HepG2 (cell line): ENCODE measurements at regions of chr2 and their contacts with region 1.

Region 1: GRCh38 chr2:69214898-69215297 is 172.1 kb downstream of the GFPT1 start:
- DNase-seq: peak; percentile 46
- ATAC-seq: no peak
- H3K4me3 ChIP-seq: no peak overlapping the region
- H3K27ac ChIP-seq: peak overlapping the region; percentile 87
- H3K4me1 ChIP-seq: peaks cover 74% of the 10 kb centered on the region
- H3K27me3 ChIP-seq: no peaks in the 10 kb centered on the region
- CTCF ChIP-seq: no peak
- EP300 ChIP-seq: no peak
- POLR2A ChIP-seq: no peak
- RAD21 ChIP-seq: no peak

Region 2: GRCh38 chr2:68031542-68032160 is 1183.2 kb before region 1 on chr2:
- CTCF ChIA-PET with region 1: no interaction called
- POLR2A ChIA-PET with region 1: no interaction called
- in situ Hi-C with region 1: no loop called
- intact Hi-C with region 1: no loop called
- DNase-seq: peak; percentile 64
- ATAC-seq: peak; percentile 83
- H3K4me3 ChIP-seq: no peak overlapping the region
- H3K27ac ChIP-seq: no peak overlapping the region
- H3K4me1 ChIP-seq: no peaks in the 10 kb centered on the region
- H3K27me3 ChIP-seq: no peaks in the 10 kb centered on the region
- CTCF ChIP-seq: peak; percentile 84
- EP300 ChIP-seq: no peak
- POLR2A ChIP-seq: no peak
- RAD21 ChIP-seq: peak; percentile 74

Region 3: GRCh38 chr2:69169655-69170389 is 45.1 kb before region 1 on chr2:
- CTCF ChIA-PET with region 1: no interaction called
- POLR2A ChIA-PET with region 1: interaction called, 3 read pairs
- in situ Hi-C with region 1: no loop called
- intact Hi-C with region 1: loop called (anchors 2 kb)
- DNase-seq: no peak
- ATAC-seq: no peak
- H3K4me3 ChIP-seq: no peak overlapping the region
- H3K27ac ChIP-seq: no peak overlapping the region
- H3K4me1 ChIP-seq: peaks cover 70% of the 10 kb centered on the region
- H3K27me3 ChIP-seq: no peaks in the 10 kb centered on the region
- CTCF ChIP-seq: no peak
- EP300 ChIP-seq: no peak
- POLR2A ChIP-seq: no peak
- RAD21 ChIP-seq: no peak

Region 4: DNA sequence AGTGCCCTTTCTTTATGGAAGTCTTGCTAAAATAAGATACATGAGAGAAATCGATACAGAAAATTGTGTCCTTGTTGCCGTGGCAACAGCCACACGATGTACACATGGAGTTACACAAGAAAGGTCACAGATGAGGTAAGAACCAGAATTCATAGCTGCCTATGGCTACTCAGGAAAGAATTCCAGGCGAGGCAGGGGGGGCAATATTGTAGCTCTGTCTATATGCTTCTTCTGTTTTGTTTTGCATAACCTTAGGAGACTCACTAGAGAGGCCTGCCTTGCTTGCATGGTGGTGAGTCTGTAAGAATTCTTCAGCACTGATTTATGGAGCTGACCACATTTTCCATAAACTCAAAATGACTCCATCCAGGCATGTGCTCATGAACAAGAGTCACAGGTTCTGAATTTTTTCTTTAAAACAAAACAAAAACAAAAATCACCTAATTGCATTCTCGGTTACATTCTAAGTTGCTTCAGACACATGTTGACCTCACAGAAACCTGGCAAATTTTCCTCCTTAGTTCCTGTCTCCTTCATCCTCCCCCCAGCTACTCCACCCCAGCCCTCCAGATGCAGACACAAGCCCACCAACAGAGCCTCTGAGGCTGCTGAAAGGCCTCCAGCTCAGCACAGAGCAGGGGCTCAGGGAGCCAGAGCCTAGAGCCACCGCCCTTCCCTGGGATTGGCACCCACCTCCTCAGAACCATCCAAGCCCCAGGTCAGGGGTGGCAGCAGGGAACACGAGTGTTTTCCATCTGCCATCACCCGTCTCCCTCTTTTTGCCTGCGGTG is 18.4 kb before region 1 on chr2:
- CTCF ChIA-PET with region 1: no interaction called
- POLR2A ChIA-PET with region 1: interaction called, 5 read pairs
- in situ Hi-C with region 1: no loop called
- intact Hi-C with region 1: loop called (anchors 2 kb)
- DNase-seq: peak; percentile 75
- ATAC-seq: peak; percentile 56
- H3K4me3 ChIP-seq: no peak overlapping the region
- H3K27ac ChIP-seq: peak overlapping the region; percentile 25
- H3K4me1 ChIP-seq: peaks cover 41% of the 10 kb centered on the region
- H3K27me3 ChIP-seq: no peaks in the 10 kb centered on the region
- CTCF ChIP-seq: no peak
- EP300 ChIP-seq: peak; percentile 50 to 81; a peak in 2 of 4 replicates
- POLR2A ChIP-seq: no peak
- RAD21 ChIP-seq: no peak

Region 5: DNA sequence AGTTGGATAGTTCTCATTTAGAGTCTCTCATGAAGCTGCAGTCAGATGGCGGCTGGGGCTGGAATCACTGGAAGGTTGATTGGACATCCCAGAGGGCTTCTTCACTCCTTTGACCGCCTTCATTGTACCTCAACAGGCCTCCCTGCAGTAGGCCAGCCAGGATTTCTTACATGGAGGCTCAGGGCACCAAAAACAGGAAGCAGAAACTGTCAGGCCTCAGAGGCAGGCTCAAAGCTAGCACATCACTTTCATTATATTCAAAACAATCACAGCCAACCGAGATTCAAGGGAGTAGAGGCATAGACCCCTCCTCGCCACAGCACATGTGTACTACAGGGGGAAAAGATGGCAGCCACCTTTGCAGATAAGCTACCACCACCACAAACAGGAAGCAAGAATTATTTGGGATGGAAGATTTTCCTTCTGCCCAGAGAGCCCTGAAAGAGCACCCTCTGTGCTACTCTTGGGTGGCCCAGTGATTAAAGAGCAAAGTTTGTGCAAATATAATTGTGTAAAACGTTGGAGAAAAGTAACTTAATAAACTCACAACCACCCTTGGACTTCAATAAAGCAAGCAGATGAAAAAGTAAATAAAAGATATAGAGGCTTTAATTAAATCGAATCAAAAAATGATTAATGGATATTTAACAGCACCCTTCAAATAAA is 16.8 kb after region 1 on chr2:
- CTCF ChIA-PET with region 1: no interaction called
- POLR2A ChIA-PET with region 1: interaction called, 5 read pairs
- in situ Hi-C with region 1: no loop called
- intact Hi-C with region 1: loop called (anchors 2 kb)
- DNase-seq: no peak
- ATAC-seq: no peak
- H3K4me3 ChIP-seq: no peak overlapping the region
- H3K27ac ChIP-seq: peak overlapping the region; percentile 9
- H3K4me1 ChIP-seq: peaks cover 21% of the 10 kb centered on the region
- H3K27me3 ChIP-seq: no peaks in the 10 kb centered on the region
- CTCF ChIP-seq: no peak
- EP300 ChIP-seq: no peak
- POLR2A ChIP-seq: no peak
- RAD21 ChIP-seq: no peak

Region 6: DNA sequence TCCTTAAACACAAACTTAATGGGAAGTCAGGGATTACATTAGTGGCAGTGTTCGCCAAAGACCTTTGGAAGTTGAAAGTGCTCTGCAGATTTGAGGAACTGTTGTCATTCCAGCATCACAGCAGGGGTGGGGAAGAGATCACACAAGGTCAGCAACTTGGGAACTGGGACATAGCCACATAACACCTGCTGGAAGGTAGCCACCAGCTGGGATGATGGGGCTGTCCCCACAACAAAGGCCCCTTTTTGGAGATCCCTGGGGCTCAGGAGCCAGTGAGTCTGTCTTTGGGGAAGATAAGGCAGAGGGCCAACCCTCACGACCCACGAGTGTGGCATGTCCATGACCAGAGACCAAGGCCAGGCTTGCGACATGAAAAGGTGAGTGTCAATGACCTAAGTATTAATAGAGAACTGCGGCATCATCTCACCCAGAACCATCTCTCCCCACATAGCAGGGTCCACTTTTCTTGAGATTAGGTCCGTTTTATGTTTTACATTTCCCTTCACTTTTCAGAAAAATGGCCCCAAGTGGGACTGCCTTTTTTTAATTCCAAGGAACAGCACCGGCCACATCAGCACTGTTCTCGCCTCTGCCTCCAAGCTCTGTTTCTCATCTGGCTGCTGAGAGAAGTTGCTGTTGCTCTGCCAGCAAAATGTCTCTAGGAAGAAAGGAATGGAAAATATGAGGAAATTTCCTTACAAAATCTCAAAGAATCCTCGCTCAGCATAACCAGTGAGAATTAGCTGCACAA is 65.2 kb after region 1 on chr2:
- CTCF ChIA-PET with region 1: no interaction called
- POLR2A ChIA-PET with region 1: no interaction called
- in situ Hi-C with region 1: no loop called
- intact Hi-C with region 1: loop called (anchors 1 kb)
- DNase-seq: peak; percentile 92
- ATAC-seq: peak; percentile 91
- H3K4me3 ChIP-seq: peak overlapping the region in 2 of 3 experiments; percentile 28 to 31; a peak in 3 of 6 replicates
- H3K27ac ChIP-seq: peak overlapping the region; percentile 67
- H3K4me1 ChIP-seq: peaks cover 50% of the 10 kb centered on the region
- H3K27me3 ChIP-seq: no peaks in the 10 kb centered on the region
- CTCF ChIP-seq: no peak
- EP300 ChIP-seq: peak; percentile 94; a peak in 2 of 4 replicates
- POLR2A ChIP-seq: peak in 1 of 2 experiments; percentile 72; a peak in 2 of 4 replicates
- RAD21 ChIP-seq: no peak